MCF 10A (cell line): ENCODE measurements at regions of chr16 and their contacts with region 1.

Region 1: DNA sequence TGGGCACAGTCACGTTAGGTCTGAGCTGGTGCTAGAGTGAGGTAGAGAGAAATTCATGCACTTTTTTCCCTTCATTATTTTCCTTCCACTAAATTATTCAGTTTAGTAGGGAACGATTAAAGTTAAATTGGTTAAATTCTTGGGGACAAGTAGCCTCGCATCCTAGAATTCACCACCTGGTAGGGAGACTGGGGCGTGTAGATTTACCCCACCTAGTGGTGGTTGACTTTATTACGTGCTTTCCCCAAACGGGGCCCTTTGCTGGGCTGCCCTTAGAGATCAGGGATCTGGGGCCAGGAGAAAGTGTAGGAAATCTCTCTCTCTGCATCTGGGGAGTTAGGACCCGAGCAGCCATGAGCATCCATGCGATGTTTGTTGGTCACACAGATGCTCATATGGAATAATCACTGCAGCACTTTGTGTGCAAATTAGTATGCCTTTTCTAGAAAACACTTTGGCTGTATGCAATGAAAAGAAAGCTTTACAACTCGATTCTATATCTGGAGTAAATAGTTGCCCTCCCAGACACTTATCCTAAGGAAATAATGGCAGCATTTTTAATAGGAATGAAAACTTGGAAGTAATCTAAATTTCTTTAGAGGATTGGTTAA is 107.0 kb downstream of the PLCG2 start:
- DNase-seq: peak; percentile 54
- H3K4me3 Mint-ChIP-seq: no peak overlapping the region
- H3K27ac Mint-ChIP-seq: no peak overlapping the region
- H3K4me1 Mint-ChIP-seq: peaks cover 13% of the 10 kb centered on the region
- H3K27me3 Mint-ChIP-seq: no peaks in the 10 kb centered on the region
- CTCF ChIP-seq: peak; percentile 47

Region 2: DNA sequence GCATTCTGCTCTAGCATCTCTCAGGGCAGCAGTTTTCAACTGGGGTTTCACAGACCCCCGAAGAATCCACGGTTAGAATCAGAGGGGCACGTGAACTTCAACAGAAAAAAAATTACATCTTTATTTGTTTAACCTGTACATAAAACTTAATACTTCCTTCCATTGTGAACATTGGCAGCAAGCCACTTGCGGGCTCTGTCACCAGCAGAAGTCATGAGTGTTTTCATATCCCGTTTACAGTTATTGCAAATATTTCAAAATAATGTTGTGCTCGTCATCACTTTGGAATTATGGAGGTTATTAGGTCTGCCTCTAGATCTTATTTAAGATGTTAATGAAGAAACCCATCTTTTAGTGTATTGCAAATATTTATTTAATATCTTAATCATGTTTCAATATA is 15.4 kb after region 1 on chr16:
- CTCF ChIA-PET with region 1: interaction called, 31 read pairs
- POLR2A ChIA-PET with region 1: no interaction called
- intact Hi-C with region 1: no loop called
- DNase-seq: peak; percentile 78
- H3K4me3 Mint-ChIP-seq: no peak overlapping the region
- H3K27ac Mint-ChIP-seq: no peak overlapping the region
- H3K4me1 Mint-ChIP-seq: peaks cover 6% of the 10 kb centered on the region
- H3K27me3 Mint-ChIP-seq: no peaks in the 10 kb centered on the region
- CTCF ChIP-seq: no peak

Region 3: GRCh38 chr16:81996664-81997622 is 110.9 kb after region 1 on chr16:
- CTCF ChIA-PET with region 1: interaction called, 10 read pairs
- POLR2A ChIA-PET with region 1: no interaction called
- intact Hi-C with region 1: loop called (anchors 1 kb)
- DNase-seq: peak; percentile 84
- H3K4me3 Mint-ChIP-seq: no peak overlapping the region
- H3K27ac Mint-ChIP-seq: peak overlapping the region; percentile 31
- H3K4me1 Mint-ChIP-seq: peaks cover 25% of the 10 kb centered on the region
- H3K27me3 Mint-ChIP-seq: no peaks in the 10 kb centered on the region
- CTCF ChIP-seq: peak; percentile 44

Region 4: DNA sequence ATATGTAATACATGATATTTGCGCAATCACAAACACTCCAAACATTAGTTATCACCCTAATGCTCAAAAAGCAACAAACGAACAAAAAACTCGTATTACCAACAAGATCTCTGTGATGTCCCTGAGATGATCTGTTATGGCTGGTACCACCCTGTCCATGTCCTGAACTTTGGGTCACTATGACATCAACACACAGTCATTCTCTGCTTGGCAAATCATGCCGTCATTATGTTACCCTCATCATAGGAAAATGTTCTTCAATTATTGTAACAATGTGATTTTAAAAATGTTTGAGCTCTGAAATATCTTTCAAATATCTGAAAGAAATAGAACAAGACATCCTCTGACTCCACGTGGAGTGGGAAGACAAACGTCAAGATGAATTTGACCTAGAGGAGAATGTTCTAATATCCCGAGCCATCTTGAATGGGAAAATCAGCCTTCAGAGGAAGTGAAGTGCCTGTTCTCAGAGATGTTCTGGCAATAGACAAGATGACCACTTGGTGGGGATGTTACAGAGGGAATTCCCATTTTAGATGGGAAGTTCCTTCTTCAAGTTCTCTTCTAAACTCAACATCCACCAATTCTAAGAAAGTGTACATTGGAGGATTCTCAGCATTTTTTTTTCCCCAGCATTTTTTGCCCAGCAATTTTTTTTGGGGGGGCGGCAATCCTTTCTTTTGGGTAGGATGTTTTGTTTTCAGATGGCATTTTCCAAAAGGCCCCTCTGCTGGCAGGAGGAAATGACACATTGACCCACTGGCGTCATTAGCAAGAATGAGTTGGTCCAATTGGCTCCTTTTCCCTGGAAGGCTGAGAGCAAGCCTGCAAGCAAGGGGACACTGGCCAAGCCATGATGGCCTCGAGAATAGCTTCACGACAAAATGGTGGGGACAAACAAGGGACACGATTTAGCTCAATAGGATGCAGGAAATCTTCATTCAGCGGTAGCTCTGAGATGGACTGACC is 145.3 kb after region 1 on chr16:
- CTCF ChIA-PET with region 1: no interaction called
- POLR2A ChIA-PET with region 1: no interaction called
- intact Hi-C with region 1: loop called (anchors 1 kb)
- DNase-seq: peak; percentile 81
- H3K4me3 Mint-ChIP-seq: no peak overlapping the region
- H3K27ac Mint-ChIP-seq: no peak overlapping the region
- H3K4me1 Mint-ChIP-seq: peaks cover 20% of the 10 kb centered on the region
- H3K27me3 Mint-ChIP-seq: no peaks in the 10 kb centered on the region
- CTCF ChIP-seq: peak; percentile 61

Region 5: GRCh38 chr16:82169861-82170845 is 284.1 kb after region 1 on chr16 and contains the start of gene MPHOSPH6:
- CTCF ChIA-PET with region 1: interaction called, 4 read pairs
- POLR2A ChIA-PET with region 1: no interaction called
- intact Hi-C with region 1: loop called (anchors 1 kb)
- DNase-seq: peak; percentile 90
- H3K4me3 Mint-ChIP-seq: peak within 1 kb of the TSS; percentile 79
- H3K27ac Mint-ChIP-seq: peak within 1 kb of the TSS; percentile 68
- H3K4me1 Mint-ChIP-seq: peaks cover 16% of the 10 kb centered on the region
- H3K27me3 Mint-ChIP-seq: peaks cover 26% of the 10 kb centered on the region
- CTCF ChIP-seq: no peak
- total RNA-seq, gene MPHOSPH6: 39.9 and 46.8 TPM in 2 replicates

Region 6: DNA sequence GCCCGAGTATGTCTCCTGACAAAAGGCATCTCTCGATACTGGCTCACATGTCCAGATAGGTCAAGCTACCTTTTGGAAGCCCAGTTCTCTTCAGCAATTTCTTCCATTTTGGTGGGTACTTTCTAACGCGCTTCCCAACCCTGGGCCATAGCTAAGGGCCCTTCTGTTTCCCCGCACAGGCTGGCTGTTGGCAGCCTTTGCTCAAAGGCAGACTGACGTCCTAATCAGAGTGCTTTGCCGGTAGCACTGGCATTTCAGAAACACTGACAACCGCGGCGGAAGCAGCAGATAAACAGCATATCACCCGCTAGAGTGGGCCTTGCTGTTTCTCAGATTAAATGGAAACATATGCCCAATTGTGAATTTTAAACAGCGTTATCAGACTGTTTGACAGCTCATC is 333.2 kb after region 1 on chr16:
- CTCF ChIA-PET with region 1: no interaction called
- POLR2A ChIA-PET with region 1: no interaction called
- intact Hi-C with region 1: no loop called
- DNase-seq: no peak
- H3K4me3 Mint-ChIP-seq: no peak overlapping the region
- H3K27ac Mint-ChIP-seq: no peak overlapping the region
- H3K4me1 Mint-ChIP-seq: no peaks in the 10 kb centered on the region
- H3K27me3 Mint-ChIP-seq: peaks cover 13% of the 10 kb centered on the region
- CTCF ChIP-seq: no peak

Region 7: DNA sequence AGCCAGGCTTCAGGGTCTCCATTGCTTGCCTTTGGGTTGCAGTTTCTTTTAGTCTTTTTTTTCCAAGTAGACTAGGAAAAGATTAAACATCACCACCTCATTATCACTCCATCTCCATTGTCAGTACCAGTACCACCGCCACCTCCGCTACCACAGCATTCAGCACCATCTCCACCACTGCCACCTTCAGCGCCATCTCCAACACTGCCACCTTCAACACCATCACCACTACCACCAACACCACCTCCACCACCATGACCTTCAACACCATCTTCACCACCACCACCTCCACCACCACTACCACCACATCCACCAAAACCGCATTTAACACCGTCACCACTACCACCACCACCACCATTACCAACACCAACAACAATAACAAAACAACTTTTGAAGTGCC is 425.4 kb after region 1 on chr16:
- CTCF ChIA-PET with region 1: no interaction called
- POLR2A ChIA-PET with region 1: no interaction called
- intact Hi-C with region 1: no loop called
- DNase-seq: no peak
- H3K4me3 Mint-ChIP-seq: no peak overlapping the region
- H3K27ac Mint-ChIP-seq: no peak overlapping the region
- H3K4me1 Mint-ChIP-seq: no peaks in the 10 kb centered on the region
- H3K27me3 Mint-ChIP-seq: peaks cover 33% of the 10 kb centered on the region
- CTCF ChIP-seq: no peak